ENCODE measurements at regions of chr1 and their contacts with region 1.

Region 1: DNA sequence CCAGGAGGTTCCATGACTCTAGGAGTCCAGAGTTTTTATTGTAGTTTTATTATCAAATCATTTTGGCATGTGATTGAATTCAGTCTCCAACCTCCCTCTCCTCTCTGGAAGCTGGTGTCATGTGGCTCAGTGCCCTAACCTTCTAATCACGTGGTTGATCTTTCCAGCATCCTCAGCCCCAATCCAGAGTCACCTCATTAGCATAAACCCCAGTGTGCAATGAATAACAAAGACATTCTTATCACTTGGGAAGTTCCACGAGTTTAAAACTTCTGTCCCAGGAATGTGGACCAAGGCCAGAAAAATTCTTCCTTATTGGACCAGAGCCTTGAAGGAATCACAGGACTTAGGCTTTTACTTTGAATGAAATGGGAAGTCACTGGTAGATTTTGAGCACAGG is 52.2 kb downstream of the KIRREL1 start:
- DNase-seq: no peak
- H3K4me3 ChIP-seq: no peak overlapping the region
- H3K27ac ChIP-seq: peak overlapping the region in 1 of 2 donors; percentile 30
- H3K4me1 ChIP-seq: no peaks in the 10 kb centered on the region
- H3K27me3 ChIP-seq: no peaks in the 10 kb centered on the region
- CTCF ChIP-seq: no peak
- POLR2A ChIP-seq: no peak

Region 2: DNA sequence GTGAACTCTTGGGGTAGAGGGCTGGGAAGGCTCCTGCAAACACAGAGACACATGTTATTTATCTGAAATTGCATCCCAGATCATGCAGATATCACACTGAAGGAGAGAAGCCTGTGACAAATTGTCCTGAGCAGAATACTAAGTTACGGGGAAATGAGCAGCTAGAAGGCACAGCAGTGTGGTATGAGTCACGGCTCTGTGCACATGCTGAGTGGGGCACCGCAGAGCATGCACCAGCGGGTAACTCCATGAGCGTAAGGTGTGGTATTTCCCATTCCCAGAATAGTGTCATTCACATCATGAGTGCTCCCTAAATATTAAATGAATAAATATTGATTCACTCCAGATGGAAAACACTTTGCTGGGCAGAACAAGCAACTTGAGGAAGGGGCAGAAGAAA is 247.4 kb before region 1 on chr1:
- intact Hi-C with region 1: loop called (anchors 10 kb)
- DNase-seq: no peak
- H3K4me3 ChIP-seq: no peak overlapping the region
- H3K27ac ChIP-seq: no peak overlapping the region
- H3K4me1 ChIP-seq: no peaks in the 10 kb centered on the region
- H3K27me3 ChIP-seq: no peaks in the 10 kb centered on the region
- CTCF ChIP-seq: no peak
- POLR2A ChIP-seq: no peak